Gastrocnemius medialis (tissue), 4 donors: ENCODE measurements at regions of chr2 and their contacts with region 1.

Region 1: GRCh38 chr2:11681722-11682589 is 12.0 kb upstream of the NTSR2 start:
- DNase-seq: peak; percentile 59 to 82
- ATAC-seq: peak; percentile 9 to 30
- H3K4me3 ChIP-seq: peak overlapping the region in 2 of 4 donors; percentile 22 to 63
- H3K27ac ChIP-seq: peak overlapping the region; percentile 92 to 100 (median 93)
- H3K4me1 ChIP-seq: peaks cover 54 to 80% of the 10 kb centered on the region in 2 donors
- H3K27me3 ChIP-seq: no peaks in the 10 kb centered on the region
- CTCF ChIP-seq: peak; percentile 91 to 99 (median 98)
- POLR2A ChIP-seq: peak in 1 of 2 donors; percentile 22

Region 2: GRCh38 chr2:11477994-11478393 is 204.0 kb before region 1 on chr2:
- in situ Hi-C with region 1: loop called in 1 of 4 experiments (anchors 25 kb)
- intact Hi-C with region 1: loop called (anchors 1 kb)
- DNase-seq: peak; percentile 81 to 82
- ATAC-seq: peak; percentile 75 to 76
- H3K4me3 ChIP-seq: no peak overlapping the region
- H3K27ac ChIP-seq: no peak overlapping the region
- H3K4me1 ChIP-seq: no peaks in the 10 kb centered on the region
- H3K27me3 ChIP-seq: no peaks in the 10 kb centered on the region
- CTCF ChIP-seq: peak; percentile 76 to 92 (median 88)
- POLR2A ChIP-seq: no peak

Region 3: GRCh38 chr2:11498543-11499080 is 183.3 kb before region 1 on chr2:
- in situ Hi-C with region 1: loop called in 2 of 4 experiments (anchors 10 to 25 kb)
- intact Hi-C with region 1: loop called (anchors 5 kb)
- DNase-seq: peak; percentile 95 to 98
- ATAC-seq: peak; percentile 95 to 97
- H3K4me3 ChIP-seq: no peak overlapping the region
- H3K27ac ChIP-seq: peak overlapping the region; percentile 66 to 84 (median 78)
- H3K4me1 ChIP-seq: peaks cover 13 to 21% of the 10 kb centered on the region in 2 donors
- H3K27me3 ChIP-seq: no peaks in the 10 kb centered on the region
- CTCF ChIP-seq: no peak
- POLR2A ChIP-seq: peak; percentile 26 to 41